ENCODE measurements at regions of chr7 and their contacts with region 1.

Region 1: GRCh38 chr7:12490117-12490688 is 80.3 kb upstream of the SCIN start:
- DNase-seq: peak; percentile 26 to 61 (median 57)
- H3K4me3 ChIP-seq: no peak overlapping the region
- H3K27ac ChIP-seq: no peak overlapping the region
- H3K4me1 ChIP-seq: no peaks in the 10 kb centered on the region
- H3K27me3 ChIP-seq: no peaks in the 10 kb centered on the region

Region 2: DNA sequence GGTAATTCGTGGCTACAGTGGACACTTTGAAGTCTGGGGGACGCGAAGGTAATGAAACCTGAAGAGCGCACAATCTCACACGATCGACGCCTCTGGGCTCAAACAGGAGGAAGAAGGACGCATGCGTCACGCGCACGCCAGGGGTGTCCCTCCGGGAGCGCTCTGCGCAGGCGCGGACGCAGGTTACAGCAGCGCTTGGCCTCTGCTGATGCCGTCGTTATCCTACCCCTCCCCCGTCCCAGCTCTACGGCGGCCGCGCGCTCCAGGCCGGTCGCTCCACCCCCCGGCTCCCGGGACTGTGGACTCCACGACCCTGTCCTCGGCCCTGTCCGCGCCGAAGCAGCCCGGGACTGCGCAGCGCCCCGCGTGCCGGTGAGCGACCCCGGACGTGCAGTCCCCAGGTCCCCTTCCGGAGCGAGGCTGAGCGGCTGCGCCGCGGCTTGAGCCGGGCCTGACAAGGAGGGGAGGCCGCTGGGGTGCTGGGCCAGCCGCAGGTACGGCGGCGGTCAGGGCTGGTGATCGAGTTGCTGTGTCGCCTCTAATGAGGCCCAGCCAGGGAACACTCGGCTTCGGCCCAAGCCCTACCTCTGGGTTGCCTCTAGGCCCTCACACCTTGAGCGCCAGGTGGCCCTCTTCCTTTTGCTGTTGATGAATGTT is 279.0 kb before region 1 on chr7 and contains the start of gene TMEM106B:
- CTCF ChIA-PET with region 1: no interaction called
- POLR2A ChIA-PET with region 1: no interaction called
- DNase-seq: peak; percentile 95 to 98 (median 97)
- H3K4me3 ChIP-seq: peak within 1 kb of the TSS; percentile 66 to 94 (median 86)
- H3K27ac ChIP-seq: peak within 1 kb of the TSS; percentile 78 to 92
- H3K4me1 ChIP-seq: peaks cover 6 to 26% (median 14%) of the 10 kb centered on the region in 4 experiments
- H3K27me3 ChIP-seq: peaks cover 0 to 8% (median 0%) of the 10 kb centered on the region in 5 experiments

Region 3: DNA sequence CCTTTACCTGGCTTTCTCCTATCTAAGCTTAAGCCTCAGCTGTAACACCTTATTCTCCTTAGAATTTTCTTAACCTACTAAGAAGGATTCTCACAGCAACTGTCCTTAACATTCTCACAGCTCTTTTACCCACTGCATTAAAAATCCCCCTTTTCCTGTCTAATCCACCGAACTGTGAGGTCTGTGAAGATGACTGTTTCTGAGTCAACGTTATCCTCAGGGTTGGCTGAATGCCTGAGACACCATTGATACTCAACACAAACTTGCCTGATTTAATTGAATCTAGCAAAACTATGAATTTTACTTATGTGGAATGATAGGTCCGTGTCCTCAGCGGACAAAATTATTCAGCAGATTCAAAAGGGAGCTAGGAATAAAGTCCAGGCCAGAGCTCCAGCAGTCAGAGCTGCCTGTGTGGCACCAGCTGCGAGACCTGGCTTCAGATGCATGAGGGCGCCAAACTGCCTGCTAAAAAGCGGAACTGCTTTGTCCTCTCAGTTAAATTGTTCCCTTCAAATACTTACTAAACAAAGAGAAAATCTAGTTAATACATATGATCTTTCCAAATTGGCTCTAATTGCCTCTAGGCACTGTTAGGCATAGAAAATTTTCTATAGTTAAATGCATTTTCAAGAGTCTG is 53.2 kb before region 1 on chr7:
- CTCF ChIA-PET with region 1: interaction called, 19 read pairs
- POLR2A ChIA-PET with region 1: no interaction called
- DNase-seq: peak; percentile 32 to 79 (median 67)
- H3K4me3 ChIP-seq: no peak overlapping the region
- H3K27ac ChIP-seq: no peak overlapping the region
- H3K4me1 ChIP-seq: no peaks in the 10 kb centered on the region
- H3K27me3 ChIP-seq: no peaks in the 10 kb centered on the region

Region 4: DNA sequence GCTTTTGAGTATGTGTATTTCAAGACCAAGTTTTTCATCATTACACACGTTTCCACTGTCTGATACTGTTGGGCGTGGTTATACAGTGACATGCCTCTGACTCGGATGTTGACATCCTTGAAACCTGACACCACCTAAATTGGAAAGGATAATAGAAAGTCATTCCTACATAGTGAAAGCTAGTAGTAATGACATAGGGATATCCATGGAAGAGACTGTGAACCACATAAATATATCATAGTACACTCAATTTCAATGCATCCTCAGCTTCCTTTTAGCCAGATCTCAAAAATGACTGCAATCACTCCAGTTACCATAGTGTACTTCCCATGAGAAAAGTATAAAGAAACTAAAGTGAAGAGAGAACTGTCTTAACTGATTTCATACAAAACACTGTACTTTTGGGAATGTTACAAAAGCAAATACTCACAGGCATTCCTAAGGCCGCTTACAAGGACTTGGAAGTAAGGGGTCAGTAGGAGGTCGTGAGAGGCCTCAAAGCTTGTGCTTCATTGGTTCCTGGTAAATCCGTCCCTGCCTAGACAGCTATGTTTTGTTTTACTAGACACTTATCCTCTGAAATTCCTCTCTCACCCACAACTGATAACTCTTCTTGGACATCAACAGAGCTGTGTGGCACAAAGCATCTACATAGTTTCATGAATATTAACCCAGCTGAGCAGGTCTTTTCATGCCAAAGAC is 14.7 kb before region 1 on chr7:
- CTCF ChIA-PET with region 1: interaction called, 10 read pairs
- POLR2A ChIA-PET with region 1: no interaction called
- DNase-seq: no peak
- H3K4me3 ChIP-seq: no peak overlapping the region
- H3K27ac ChIP-seq: no peak overlapping the region
- H3K4me1 ChIP-seq: no peaks in the 10 kb centered on the region
- H3K27me3 ChIP-seq: no peaks in the 10 kb centered on the region

Measured in common myeloid progenitor, CD34-positive (primary cell).